PC-9 (cell line): ENCODE measurements at regions of chr3 and their contacts with region 1.

Region 1: GRCh38 chr3:14203521-14204079 is 25.0 kb downstream of the LSM3 start:
- DNase-seq: peak; percentile 62 to 63
- H3K4me3 ChIP-seq: no peak overlapping the region
- H3K27ac ChIP-seq: no peak overlapping the region
- H3K4me1 ChIP-seq: peaks cover 39% of the 10 kb centered on the region
- H3K27me3 ChIP-seq: no peaks in the 10 kb centered on the region
- CTCF ChIP-seq: peak; percentile 96

Region 2: DNA sequence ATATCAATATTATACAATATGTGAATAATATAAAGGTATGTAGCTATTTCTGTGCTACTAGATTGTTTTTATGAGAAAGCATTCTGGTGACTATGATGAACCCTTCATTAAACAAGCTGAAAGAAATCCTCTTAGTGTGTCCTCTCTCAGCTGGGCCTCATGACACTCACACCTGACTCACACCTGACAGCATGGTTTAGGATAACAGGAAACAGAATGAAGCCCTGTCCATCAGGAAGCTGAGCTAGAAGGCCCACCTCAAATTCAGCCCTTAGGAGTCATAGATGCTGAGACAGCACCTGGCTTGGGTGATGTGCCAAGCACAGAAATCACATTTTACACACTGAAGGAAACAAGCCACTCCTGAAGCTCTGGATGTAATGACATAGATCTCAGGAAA is 109.8 kb before region 1 on chr3:
- CTCF ChIA-PET with region 1: no interaction called
- POLR2A ChIA-PET with region 1: no interaction called
- intact Hi-C with region 1: no loop called
- DNase-seq: peak in 1 of 2 experiments; percentile 50
- H3K4me3 ChIP-seq: no peak overlapping the region
- H3K27ac ChIP-seq: no peak overlapping the region
- H3K4me1 ChIP-seq: no peaks in the 10 kb centered on the region
- H3K27me3 ChIP-seq: no peaks in the 10 kb centered on the region
- CTCF ChIP-seq: no peak

Region 3: GRCh38 chr3:14225421-14225820 is 21.8 kb after region 1 on chr3:
- CTCF ChIA-PET with region 1: interaction called, 15 read pairs
- POLR2A ChIA-PET with region 1: no interaction called
- intact Hi-C with region 1: loop called (anchors 1 kb)
- DNase-seq: peak in 1 of 2 experiments; percentile 80
- H3K4me3 ChIP-seq: peak overlapping the region; percentile 49; the same call in 1 of the 2 replicates
- H3K27ac ChIP-seq: peak overlapping the region; percentile 86
- H3K4me1 ChIP-seq: peaks cover 82% of the 10 kb centered on the region
- H3K27me3 ChIP-seq: no peaks in the 10 kb centered on the region
- CTCF ChIP-seq: no peak

Region 4: GRCh38 chr3:14371573-14372474 is 168.2 kb after region 1 on chr3:
- CTCF ChIA-PET with region 1: interaction called, 7 read pairs
- POLR2A ChIA-PET with region 1: no interaction called
- intact Hi-C with region 1: loop called (anchors 5 kb)
- DNase-seq: peak; percentile 90 to 93
- H3K4me3 ChIP-seq: no peak overlapping the region
- H3K27ac ChIP-seq: peak overlapping the region; percentile 62
- H3K4me1 ChIP-seq: peaks cover 54% of the 10 kb centered on the region
- H3K27me3 ChIP-seq: no peaks in the 10 kb centered on the region
- CTCF ChIP-seq: no peak; the same call in 1 of the 2 replicates

Region 5: DNA sequence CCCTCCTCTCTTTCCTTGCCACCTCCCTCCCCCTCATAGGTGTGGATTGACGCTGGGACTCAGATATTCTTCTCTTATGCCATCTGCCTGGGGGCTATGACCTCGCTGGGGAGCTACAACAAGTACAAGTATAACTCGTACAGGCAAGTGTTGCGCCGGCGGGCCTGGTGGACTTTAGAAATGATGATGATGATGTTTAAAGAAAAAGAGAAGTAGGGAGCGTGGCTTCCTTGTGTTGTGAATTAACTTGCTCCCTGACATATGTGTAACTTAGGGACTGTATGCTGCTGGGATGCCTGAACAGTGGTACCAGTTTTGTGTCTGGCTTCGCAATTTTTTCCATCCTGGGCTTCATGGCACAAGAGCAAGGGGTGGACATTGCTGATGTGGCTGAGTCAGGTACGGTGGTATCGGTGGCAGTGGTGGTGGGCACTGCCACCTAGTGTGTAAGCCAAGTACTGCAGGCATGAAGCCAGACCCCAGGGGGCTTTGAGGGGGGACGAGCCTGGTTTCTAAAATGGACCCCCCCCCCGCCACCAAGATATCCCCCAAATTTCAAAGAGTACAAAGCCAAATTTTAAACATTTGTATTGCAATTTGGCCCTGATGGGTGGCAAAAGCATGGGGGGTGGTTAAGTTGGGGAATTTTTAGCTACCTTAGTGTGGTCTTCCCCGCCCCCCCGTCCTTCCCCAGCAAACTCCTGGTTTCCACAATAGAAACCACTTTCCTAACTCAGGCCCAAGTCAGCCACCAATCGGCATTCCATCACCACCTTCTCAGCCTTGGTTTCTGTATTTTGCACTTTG is 264.4 kb after region 1 on chr3:
- CTCF ChIA-PET with region 1: interaction called, 12 read pairs
- POLR2A ChIA-PET with region 1: no interaction called
- intact Hi-C with region 1: loop called (anchors 2 kb)
- DNase-seq: no peak
- H3K4me3 ChIP-seq: no peak overlapping the region
- H3K27ac ChIP-seq: no peak overlapping the region
- H3K4me1 ChIP-seq: peaks cover 12% of the 10 kb centered on the region
- H3K27me3 ChIP-seq: no peaks in the 10 kb centered on the region
- CTCF ChIP-seq: peak; percentile 93

Region 6: GRCh38 chr3:14548321-14548729 is 344.7 kb after region 1 on chr3:
- CTCF ChIA-PET with region 1: interaction called, 6 read pairs
- POLR2A ChIA-PET with region 1: no interaction called
- intact Hi-C with region 1: loop called (anchors 1 kb)
- DNase-seq: peak in 1 of 2 experiments; percentile 48
- H3K4me3 ChIP-seq: no peak overlapping the region
- H3K27ac ChIP-seq: no peak overlapping the region
- H3K4me1 ChIP-seq: no peaks in the 10 kb centered on the region
- H3K27me3 ChIP-seq: peaks cover 44% of the 10 kb centered on the region
- CTCF ChIP-seq: peak; percentile 78

Region 7: DNA sequence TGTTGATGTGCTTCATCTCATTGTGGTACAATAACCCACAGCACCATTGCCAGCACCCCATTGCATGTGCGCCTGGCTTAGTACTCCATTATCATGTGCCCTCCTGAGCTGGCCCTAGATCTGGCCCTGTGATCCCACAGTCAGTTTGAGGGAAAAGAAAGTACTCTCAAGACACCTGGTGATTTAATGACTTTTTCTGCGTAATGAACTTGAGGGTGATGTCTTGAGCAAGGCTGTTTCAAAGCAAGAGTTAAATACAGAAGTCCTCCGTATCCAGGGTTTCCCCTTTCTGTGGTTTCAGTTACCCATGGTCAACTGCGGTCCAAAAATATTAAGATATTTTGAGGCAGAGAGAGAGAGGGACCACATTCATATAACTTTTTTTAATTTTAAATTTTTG is 487.6 kb after region 1 on chr3:
- CTCF ChIA-PET with region 1: no interaction called
- POLR2A ChIA-PET with region 1: no interaction called
- intact Hi-C with region 1: no loop called
- DNase-seq: no peak
- H3K4me3 ChIP-seq: no peak overlapping the region
- H3K27ac ChIP-seq: no peak overlapping the region
- H3K4me1 ChIP-seq: no peaks in the 10 kb centered on the region
- H3K27me3 ChIP-seq: peaks cover 58% of the 10 kb centered on the region
- CTCF ChIP-seq: no peak